ENCODE measurements at regions of chr6 and their contacts with region 1.

Region 1: GRCh38 chr6:37698261-37699137 is 816 bp upstream of the MDGA1 start:
- DNase-seq: peak; percentile 31
- ATAC-seq: peak; percentile 19
- H3K4me3 ChIP-seq: peak overlapping the region; percentile 56
- H3K27ac ChIP-seq: no peak overlapping the region; the same call in 1 of the 2 replicates
- H3K4me1 ChIP-seq: peaks cover 12% of the 10 kb centered on the region
- H3K27me3 ChIP-seq: peaks cover 8% of the 10 kb centered on the region; the same call in 1 of the 2 replicates
- CTCF ChIP-seq: no peak
- POLR2A ChIP-seq: no peak
- RAD21 ChIP-seq: no peak

Region 2: GRCh38 chr6:38671885-38672467 is 973.5 kb after region 1 on chr6:
- CTCF ChIA-PET with region 1: no interaction called
- POLR2A ChIA-PET with region 1: no interaction called
- dilution Hi-C with region 1: no loop called
- in situ Hi-C with region 1: no loop called
- intact Hi-C with region 1: loop called (anchors 5 kb)
- DNase-seq: peak; percentile 76
- ATAC-seq: peak; percentile 91
- H3K4me3 ChIP-seq: no peak overlapping the region
- H3K27ac ChIP-seq: no peak overlapping the region
- H3K4me1 ChIP-seq: no peaks in the 10 kb centered on the region
- H3K27me3 ChIP-seq: no peaks in the 10 kb centered on the region
- CTCF ChIP-seq: peak; percentile 80
- POLR2A ChIP-seq: no peak
- RAD21 ChIP-seq: peak; percentile 78